IMR-90 (cell line): ENCODE measurements at regions of chr16 and their contacts with region 1.

Region 1: DNA sequence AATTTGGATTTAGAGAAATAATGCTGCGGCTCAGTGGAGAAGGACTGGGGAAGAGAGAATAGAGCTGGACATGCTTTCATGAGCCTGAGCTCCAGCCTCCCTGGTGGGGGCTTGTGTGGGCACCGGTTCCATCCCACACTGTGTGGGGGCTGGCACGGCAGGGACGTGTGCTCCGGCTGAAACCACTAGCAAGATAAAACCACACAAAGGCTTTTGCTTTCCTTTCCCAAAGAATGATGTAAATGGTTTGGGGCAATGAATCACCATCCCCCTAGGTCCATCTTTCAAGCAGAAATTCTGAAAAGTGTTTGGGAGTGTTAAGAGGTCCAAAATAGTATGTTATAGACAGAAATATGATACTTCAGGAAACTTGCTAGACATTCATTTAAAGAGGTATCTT is 77.0 kb downstream of the CDH11 start:
- DNase-seq: peak; percentile 92
- ATAC-seq: peak; percentile 82
- H3K4me3 ChIP-seq: no peak overlapping the region
- H3K27ac ChIP-seq: peak overlapping the region; percentile 12; the same call in 1 of the 2 replicates
- H3K4me1 ChIP-seq: peaks cover 19% of the 10 kb centered on the region
- H3K27me3 ChIP-seq: no peaks in the 10 kb centered on the region
- CTCF ChIP-seq: no peak
- POLR2A ChIP-seq: no peak
- RAD21 ChIP-seq: no peak

Region 2: DNA sequence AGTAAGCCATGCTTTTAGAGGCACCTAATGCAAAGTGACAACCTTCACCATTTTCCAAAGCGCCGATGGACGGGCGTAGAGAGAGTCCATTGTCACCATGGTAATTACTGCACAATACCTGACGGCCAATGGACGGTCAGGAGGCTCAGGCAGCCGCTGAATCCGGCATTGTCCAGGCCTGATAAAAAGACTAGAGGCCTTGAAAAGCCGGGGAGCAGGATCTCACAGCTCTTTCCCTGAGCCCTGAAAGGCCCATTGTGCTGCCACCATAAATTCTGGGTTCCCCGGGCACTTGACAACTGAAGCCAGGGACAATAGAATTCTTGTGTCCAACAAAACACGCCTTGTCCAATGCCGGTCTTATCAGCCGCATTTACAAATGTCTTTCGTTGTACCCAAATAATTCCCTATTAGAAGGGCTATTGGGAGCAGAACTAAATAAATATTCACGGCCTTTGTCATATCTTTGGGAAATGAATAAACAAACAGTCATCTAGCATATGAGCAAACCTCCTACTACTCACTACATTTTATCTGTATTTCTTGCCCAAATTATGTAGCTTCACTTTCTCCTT is 14.6 kb after region 1 on chr16:
- CTCF ChIA-PET with region 1: no interaction called
- POLR2A ChIA-PET with region 1: no interaction called
- dilution Hi-C with region 1: no loop called
- in situ Hi-C with region 1: no loop called
- intact Hi-C with region 1: loop called (anchors 1 kb)
- DNase-seq: no peak
- ATAC-seq: no peak
- H3K4me3 ChIP-seq: no peak overlapping the region
- H3K27ac ChIP-seq: no peak overlapping the region
- H3K4me1 ChIP-seq: peaks cover 18% of the 10 kb centered on the region
- H3K27me3 ChIP-seq: no peaks in the 10 kb centered on the region
- CTCF ChIP-seq: no peak
- POLR2A ChIP-seq: no peak
- RAD21 ChIP-seq: no peak